ENCODE measurements at regions of chr4 and their contacts with region 1.

Region 1: DNA sequence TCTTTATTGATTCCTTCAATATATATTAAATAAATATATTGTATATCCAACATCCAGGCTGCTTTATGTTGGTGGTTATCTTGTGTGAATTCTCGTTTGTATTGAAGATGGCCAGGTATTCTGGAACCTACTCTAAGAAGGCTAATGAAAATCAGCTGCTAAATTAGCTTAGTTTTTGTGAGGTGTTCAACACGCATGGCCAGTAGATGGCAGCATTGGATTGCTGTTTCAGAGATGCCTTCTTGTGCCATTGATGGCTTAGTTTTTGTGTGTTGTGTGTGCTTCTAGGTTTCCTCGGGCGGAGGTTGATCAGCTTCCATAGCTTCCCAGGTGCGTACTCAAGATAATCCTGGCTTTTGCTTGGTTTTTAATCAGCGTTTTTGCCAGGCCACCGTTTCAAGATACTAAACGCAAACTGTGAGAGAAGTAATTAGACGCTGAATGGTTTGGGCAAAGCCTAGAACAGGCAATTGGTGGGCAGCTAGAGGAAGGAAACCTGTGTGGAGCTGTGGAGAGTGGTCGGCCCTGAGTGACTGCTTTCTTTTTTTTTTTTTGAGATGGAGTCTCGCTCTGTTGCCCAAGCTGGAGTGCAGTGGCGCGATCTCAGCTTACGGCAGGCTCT is 15.1 kb downstream of the NOCT start:
- DNase-seq: peak; percentile 43 to 78
- H3K4me3 ChIP-seq: no peak overlapping the region
- H3K27ac ChIP-seq: no peak overlapping the region; the same call in 1 of the 2 replicates
- H3K4me1 ChIP-seq: peaks cover 0 to 6% (median 3%) of the 10 kb centered on the region in 4 experiments; a peak in 4 of 7 replicates
- H3K27me3 ChIP-seq: no peaks in the 10 kb centered on the region
- CTCF ChIP-seq: peak in 2 of 3 experiments; percentile 83 to 96; a peak in 3 of 4 replicates
- EP300 ChIP-seq: no peak
- POLR2A ChIP-seq: no peak
- RAD21 ChIP-seq: peak; percentile 96

Region 2: DNA sequence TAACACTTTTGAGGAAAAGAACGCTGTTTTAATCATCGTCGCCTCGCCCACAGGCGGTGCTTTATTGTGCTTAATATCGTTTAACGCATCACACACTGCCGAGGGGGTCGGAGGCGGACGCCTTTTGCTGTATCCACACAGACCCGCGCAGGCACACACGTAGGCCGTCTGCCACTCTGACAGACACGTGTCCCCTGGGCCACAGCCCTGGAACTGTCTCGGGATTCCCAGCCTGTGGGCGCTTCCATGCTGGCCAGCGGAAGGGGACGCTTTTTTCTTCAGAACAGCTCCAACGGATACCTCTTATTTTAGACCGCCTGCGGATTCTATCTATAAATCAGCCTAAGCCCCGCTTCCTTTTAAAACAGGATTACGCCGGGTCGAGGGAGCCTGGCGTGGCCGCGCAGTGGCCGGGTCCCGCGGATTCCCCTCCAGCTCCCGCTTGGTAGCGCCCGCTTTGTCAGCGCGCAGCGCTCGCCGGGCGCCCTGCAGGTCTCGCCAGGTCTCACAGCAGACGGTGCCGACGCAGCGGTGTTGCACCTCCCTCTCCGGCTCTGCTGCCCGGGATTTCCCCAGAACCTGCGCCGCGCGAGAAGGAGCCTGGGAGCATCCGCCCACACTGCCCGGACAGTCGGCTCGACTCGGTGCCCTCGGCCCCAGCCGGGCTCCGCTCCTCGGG is 15.3 kb before region 1 on chr4 and contains the start of gene NOCT:
- CTCF ChIA-PET with region 1: interaction called, 39 read pairs
- POLR2A ChIA-PET with region 1: interaction called, 39 read pairs
- DNase-seq: peak; percentile 47 to 91
- H3K4me3 ChIP-seq: peak within 1 kb of the TSS; percentile 90 to 98 (median 92)
- H3K27ac ChIP-seq: peak within 1 kb of the TSS; percentile 89
- H3K4me1 ChIP-seq: peaks cover 17 to 22% (median 21%) of the 10 kb centered on the region in 4 experiments
- H3K27me3 ChIP-seq: no peaks in the 10 kb centered on the region
- CTCF ChIP-seq: no peak
- EP300 ChIP-seq: peak in 1 of 2 experiments; percentile 100; a peak in 2 of 3 replicates
- POLR2A ChIP-seq: peak; percentile 75 to 98
- RAD21 ChIP-seq: no peak
- total RNA-seq, gene NOCT: 44.3 and 45.5 TPM in 2 replicates

Region 3: DNA sequence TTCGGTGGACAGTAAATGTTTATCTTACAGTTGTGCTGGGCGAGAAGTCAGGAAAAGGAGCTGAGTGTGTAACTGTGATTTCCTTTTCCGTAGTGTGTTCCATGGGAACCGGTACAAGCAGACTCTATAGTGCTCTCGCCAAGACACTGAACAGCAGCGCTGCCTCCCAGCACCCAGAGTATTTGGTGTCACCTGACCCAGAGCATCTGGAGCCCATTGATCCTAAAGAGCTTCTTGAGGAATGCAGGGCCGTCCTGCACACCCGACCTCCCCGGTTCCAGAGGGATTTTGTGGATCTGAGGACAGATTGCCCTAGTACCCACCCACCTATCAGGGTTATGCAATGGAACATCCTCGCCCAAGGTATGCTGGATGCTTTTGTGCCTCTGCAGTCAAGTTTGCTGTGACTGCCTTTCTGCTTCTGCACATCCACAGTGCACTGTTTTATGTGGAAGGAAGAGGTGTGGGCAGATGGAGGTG is 12.3 kb after region 1 on chr4:
- CTCF ChIA-PET with region 1: interaction called, 37 read pairs
- POLR2A ChIA-PET with region 1: interaction called, 5 read pairs
- DNase-seq: peak in 1 of 2 experiments; percentile 45
- H3K4me3 ChIP-seq: no peak overlapping the region
- H3K27ac ChIP-seq: no peak overlapping the region
- H3K4me1 ChIP-seq: no peaks in the 10 kb centered on the region
- H3K27me3 ChIP-seq: no peaks in the 10 kb centered on the region
- CTCF ChIP-seq: no peak
- EP300 ChIP-seq: no peak
- POLR2A ChIP-seq: no peak
- RAD21 ChIP-seq: no peak

Region 4: GRCh38 chr4:139054791-139055376 is 24.2 kb after region 1 on chr4:
- CTCF ChIA-PET with region 1: interaction called, 33 read pairs
- POLR2A ChIA-PET with region 1: interaction called, 4 read pairs
- DNase-seq: no peak
- H3K4me3 ChIP-seq: no peak overlapping the region
- H3K27ac ChIP-seq: no peak overlapping the region
- H3K4me1 ChIP-seq: no peaks in the 10 kb centered on the region
- H3K27me3 ChIP-seq: no peaks in the 10 kb centered on the region
- CTCF ChIP-seq: no peak
- EP300 ChIP-seq: no peak
- POLR2A ChIP-seq: no peak
- RAD21 ChIP-seq: no peak